Activated T-helper 1 cell treated with anti-CD3 and anti-CD28 coated beads, Interleukin-12 subunit alpha, Interleukin-12 subunit beta, Interleukin-2, Interleukin-4 antibody, amounts not matched to agents 30 ng/mL and 10 ng/mL and 1 ng/mL, durations not matched to agents 14 hours and 24 hours and 36 hours (primary cell): ENCODE measurements at regions of chr11 and their contacts with region 1.

Region 1: DNA sequence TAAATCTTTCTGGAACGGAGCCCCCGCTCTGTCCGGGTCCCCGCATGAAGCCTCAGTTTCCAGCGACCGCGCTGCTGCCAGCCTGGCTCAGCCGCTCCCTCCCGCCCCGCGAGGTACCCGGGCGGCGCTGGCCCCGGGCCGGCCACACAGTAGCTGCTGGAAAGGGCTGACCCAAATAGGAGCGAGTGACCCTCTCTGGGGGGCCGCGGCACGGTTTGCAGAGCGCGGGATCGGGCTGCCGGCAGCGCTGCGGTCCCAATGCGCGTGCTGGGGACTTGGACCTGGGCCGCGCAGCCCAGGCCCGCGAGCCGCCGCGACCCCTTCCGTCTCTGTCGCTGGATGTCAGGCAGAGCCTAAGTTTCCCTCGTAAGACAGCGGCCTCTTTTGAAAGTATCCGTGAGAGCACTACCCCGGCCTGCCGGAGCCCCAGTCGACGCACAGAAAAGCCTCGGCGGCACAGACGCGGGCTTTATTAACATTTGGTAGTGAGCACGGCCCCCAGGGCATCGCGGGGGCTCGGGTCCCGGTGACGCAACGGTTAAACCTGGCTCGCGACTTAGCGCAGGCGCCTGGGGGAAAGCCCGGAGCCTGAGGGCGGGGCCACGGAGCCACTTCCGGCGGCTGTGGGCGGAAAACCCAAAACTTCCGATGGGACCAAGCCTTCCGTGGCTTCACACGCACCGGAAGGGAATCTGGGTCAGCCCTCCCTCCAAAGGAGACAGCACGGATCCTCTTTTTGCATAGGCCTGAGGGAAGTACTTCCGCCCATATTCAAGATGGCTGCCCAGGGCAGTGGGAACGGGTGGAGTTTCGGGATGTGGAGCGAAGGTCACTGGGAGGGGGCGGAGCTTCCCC is 14.9 kb downstream of the BAD start:
- DNase-seq: peak; percentile 98
- H3K4me3 Mint-ChIP-seq: peak overlapping the region; percentile 89
- H3K27ac Mint-ChIP-seq: peak overlapping the region; percentile 97
- H3K4me1 Mint-ChIP-seq: peaks cover 31% of the 10 kb centered on the region
- H3K27me3 Mint-ChIP-seq: no peaks in the 10 kb centered on the region

Region 2: GRCh38 chr11:64141081-64141783 is 128.4 kb before region 1 on chr11:
- intact Hi-C with region 1: no loop called
- DNase-seq: no peak
- H3K4me3 Mint-ChIP-seq: no peak overlapping the region
- H3K27ac Mint-ChIP-seq: no peak overlapping the region
- H3K4me1 Mint-ChIP-seq: peaks cover 9% of the 10 kb centered on the region
- H3K27me3 Mint-ChIP-seq: peaks cover 1% of the 10 kb centered on the region

Region 3: GRCh38 chr11:64204464-64204989 is 65.1 kb before region 1 on chr11:
- intact Hi-C with region 1: loop called (anchors 1 kb)
- DNase-seq: peak; percentile 61
- H3K4me3 Mint-ChIP-seq: peak overlapping the region; percentile 78
- H3K27ac Mint-ChIP-seq: peak overlapping the region; percentile 70
- H3K4me1 Mint-ChIP-seq: peaks cover 39% of the 10 kb centered on the region
- H3K27me3 Mint-ChIP-seq: no peaks in the 10 kb centered on the region

Region 4: GRCh38 chr11:64225612-64226506 is 43.7 kb before region 1 on chr11 and contains the starts of genes NUDT22 and TRPT1:
- intact Hi-C with region 1: loop called (anchors 1 kb)
- DNase-seq: peak; percentile 92
- H3K4me3 Mint-ChIP-seq: peak within 1 kb of the TSS; percentile 87
- H3K27ac Mint-ChIP-seq: peak within 1 kb of the TSS; percentile 80
- H3K4me1 Mint-ChIP-seq: peaks cover 27% of the 10 kb centered on the region
- H3K27me3 Mint-ChIP-seq: no peaks in the 10 kb centered on the region
- total RNA-seq, gene NUDT22: 74.9 and 79.4 TPM in 2 replicates
- total RNA-seq, gene TRPT1: 30.3 and 35.5 TPM in 2 replicates

Region 5: DNA sequence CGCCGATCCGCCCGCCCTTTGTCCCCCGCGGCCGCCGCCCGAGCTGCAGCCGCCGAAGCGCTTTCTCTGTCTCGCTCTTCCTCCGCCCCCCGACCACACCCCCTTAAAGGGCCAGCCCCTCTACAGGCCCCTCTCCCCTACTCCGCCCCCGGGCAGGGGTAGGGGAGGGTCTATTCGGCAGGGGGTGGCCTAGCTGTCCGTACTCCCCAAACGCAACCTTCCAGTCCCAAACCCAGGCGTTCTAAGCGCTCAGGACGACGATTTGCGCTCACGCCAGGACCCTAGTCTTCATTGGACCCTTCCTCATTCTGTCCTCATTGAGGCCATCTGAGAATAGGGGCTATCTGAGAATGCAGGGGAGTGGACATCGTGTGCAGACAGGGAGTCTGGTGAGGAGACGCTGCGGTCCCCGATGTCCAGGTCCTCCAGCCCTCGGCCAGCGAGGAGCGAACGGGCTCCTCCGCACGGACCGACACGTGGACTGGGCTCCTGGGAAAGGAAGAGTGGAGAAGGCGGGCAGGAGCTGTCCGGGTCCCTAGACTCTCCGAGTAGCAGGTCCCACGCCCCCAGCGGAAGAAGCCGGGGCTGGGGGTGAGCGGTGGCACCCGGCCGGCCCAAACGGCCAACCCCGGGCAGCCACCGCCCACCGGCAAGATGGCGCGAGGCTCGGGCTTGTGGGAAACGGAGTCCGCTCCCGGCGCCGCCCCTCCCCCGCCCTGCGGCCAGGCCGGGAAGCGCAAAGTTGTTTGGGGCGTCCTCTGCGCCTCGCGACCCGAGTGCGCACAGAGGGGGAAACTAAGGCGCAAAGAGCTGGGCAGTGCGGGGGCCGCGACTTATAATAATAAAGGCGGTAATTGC is 22.5 kb before region 1 on chr11 and contains the start of gene PPP1R14B:
- intact Hi-C with region 1: loop called (anchors 1 kb)
- DNase-seq: peak; percentile 79
- H3K4me3 Mint-ChIP-seq: peak within 1 kb of the TSS; percentile 94
- H3K27ac Mint-ChIP-seq: peak within 1 kb of the TSS; percentile 94
- H3K4me1 Mint-ChIP-seq: peaks cover 29% of the 10 kb centered on the region
- H3K27me3 Mint-ChIP-seq: peaks cover 1% of the 10 kb centered on the region
- total RNA-seq, gene PPP1R14B: 238 and 248 TPM in 2 replicates

Region 6: DNA sequence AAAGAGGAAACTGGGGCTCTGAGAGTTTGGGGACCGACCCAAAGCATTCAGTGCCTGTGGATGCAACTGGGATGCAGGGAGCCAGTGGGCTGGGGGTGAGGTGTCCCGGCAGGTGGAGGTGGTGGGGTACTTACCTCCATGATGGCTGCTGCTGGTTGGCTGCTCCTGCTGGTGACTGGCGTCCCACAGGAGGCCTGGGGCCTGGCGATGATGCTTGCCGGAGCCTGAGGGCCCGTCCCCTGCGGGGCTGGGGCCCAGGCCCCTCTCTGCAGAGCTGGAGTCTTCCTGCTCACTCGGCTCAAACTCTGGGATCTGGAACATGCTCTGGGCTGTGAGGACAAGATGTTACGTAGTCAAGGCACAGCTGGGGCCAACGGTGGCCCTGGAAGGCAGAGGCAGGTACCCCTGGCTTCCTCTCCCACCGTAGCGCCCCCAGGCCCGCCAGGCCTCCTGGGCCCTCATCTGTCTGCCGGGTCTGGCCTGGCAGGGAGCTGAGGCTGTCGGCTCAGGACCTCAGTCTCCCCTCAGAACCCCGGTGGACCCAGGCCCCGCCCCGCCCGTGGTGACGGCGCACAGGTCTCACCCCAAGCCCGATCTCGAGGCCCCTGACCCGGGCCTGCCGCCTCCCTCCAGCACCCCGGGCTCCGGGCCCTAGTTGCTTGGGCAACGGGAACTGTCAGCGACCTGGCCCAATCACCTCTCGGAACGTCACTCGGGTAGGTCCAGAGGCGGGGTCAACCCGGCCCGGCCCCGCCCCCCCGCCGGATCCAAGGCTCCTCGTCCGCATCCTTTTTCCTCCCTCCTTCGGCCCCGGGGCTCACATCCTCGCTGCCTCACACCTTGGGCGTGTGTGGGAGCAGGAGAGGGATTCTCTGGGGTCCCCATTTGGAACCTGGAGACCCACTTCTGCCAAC is 14.7 kb after region 1 on chr11 and contains the start of gene BAD:
- intact Hi-C with region 1: loop called (anchors 1 kb)
- DNase-seq: peak; percentile 91
- H3K4me3 Mint-ChIP-seq: peak within 1 kb of the TSS; percentile 87
- H3K27ac Mint-ChIP-seq: peak within 1 kb of the TSS; percentile 95
- H3K4me1 Mint-ChIP-seq: peaks cover 30% of the 10 kb centered on the region
- H3K27me3 Mint-ChIP-seq: peaks cover 1% of the 10 kb centered on the region
- total RNA-seq, gene BAD: 30.1 and 38.0 TPM in 2 replicates

Region 7: GRCh38 chr11:64331557-64332371 is 62.2 kb after region 1 on chr11:
- intact Hi-C with region 1: no loop called
- DNase-seq: peak; percentile 66
- H3K4me3 Mint-ChIP-seq: peak overlapping the region; percentile 4
- H3K27ac Mint-ChIP-seq: peak overlapping the region; percentile 85
- H3K4me1 Mint-ChIP-seq: peaks cover 16% of the 10 kb centered on the region
- H3K27me3 Mint-ChIP-seq: no peaks in the 10 kb centered on the region

Region 8: GRCh38 chr11:64444838-64445441 is 175.3 kb after region 1 on chr11:
- intact Hi-C with region 1: no loop called
- DNase-seq: no peak
- H3K4me3 Mint-ChIP-seq: no peak overlapping the region
- H3K27ac Mint-ChIP-seq: no peak overlapping the region
- H3K4me1 Mint-ChIP-seq: peaks cover 21% of the 10 kb centered on the region
- H3K27me3 Mint-ChIP-seq: peaks cover 23% of the 10 kb centered on the region